ENCODE measurements at regions of chr3 and their contacts with region 1.

Region 1: DNA sequence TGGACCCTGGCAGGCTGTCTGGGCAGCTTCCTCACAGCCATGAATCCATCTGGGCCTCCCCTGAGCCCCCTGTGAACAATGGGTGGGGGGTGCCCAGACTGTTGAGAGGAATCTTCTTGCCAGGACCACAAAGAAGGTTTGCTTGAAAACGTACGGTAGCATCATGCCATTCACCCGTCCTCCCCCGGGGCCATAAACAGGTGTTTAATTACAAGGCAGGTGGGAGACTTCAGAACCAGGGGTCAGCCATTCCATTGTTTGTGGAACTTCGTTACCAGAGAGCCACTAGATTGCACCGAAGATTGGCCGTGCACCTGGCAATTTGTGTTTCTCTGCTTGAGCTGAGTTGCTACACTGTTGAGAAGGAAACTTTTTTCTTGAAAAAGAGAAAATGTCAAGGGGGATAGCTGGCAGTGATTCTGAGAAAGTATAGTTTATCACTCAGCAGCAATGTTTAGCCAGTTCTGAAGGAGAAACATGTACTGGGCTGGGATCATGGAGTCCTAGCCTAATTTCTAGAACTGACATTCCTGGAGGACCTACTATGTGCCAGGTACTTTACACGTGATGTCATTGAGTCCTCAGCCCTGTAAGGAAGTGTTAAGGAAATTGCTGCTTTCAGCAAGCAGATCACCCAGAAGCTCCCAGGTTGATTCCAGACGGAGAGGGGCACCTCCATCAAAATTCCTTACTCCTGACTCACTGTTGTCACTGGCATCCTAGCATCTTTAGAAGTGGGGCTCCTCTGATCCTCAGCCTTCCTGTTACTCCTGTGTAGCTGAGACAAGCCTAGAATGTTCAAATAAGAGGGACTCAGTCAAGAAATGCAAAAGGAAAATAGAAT is 103.8 kb upstream of the UBE2E1 start:
- DNase-seq: no peak
- ATAC-seq: no peak
- H3K4me3 ChIP-seq: no peak overlapping the region
- H3K27ac ChIP-seq: no peak overlapping the region
- H3K4me1 ChIP-seq: no peaks in the 10 kb centered on the region
- H3K27me3 ChIP-seq: no peaks in the 10 kb centered on the region
- CTCF ChIP-seq: no peak
- EP300 ChIP-seq: no peak
- POLR2A ChIP-seq: no peak
- RAD21 ChIP-seq: no peak

Region 2: DNA sequence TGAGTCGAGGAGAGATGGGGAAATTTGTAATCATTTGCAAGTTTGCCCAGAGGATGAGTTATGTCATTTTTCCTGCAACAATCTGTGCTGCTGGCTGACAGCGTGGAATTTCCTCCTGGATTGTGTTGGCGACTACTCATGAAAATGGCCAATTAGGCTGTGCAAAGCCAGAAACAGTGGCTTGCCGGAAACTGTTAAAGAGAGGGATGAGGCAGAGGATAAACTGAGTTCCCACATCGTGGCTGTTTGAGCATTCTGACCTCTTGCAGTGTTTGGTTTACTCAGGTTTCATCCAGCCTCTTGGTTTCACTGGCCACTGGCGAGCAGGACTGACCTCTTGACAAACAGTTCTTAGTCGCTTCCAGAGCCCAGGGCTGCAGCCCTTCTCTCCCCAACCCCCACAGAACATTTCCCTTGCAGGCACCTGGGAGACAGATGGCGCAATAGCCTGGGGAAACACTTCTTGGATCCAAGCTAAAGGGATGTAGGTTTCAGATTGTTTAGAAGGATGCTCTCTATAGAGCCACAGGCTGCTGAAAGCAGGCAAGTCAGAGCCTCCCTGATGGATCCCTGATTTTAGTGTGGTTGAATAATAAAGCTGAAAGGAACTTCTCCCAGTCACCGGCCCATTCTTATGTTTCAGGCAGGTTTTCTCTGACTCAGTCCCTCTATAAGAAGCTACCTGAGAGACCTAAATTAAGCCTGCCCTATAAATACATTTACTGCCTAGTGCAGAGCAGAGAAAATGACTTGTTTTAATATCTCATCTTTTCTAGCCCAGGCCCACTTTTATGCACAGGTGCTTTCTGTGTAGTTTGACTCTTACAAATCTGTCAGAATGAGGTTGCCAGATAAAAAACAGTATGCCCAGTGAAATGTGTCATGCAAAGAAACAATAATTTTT is 11.0 kb after region 1 on chr3:
- CTCF ChIA-PET with region 1: interaction called, 12 read pairs
- POLR2A ChIA-PET with region 1: no interaction called
- RAD21 ChIA-PET with region 1: interaction called, 4 read pairs
- SMC1A ChIA-PET with region 1: interaction called, 6 read pairs
- in situ Hi-C with region 1: no loop called
- intact Hi-C with region 1: no loop called
- DNase-seq: no peak
- ATAC-seq: no peak
- H3K4me3 ChIP-seq: no peak overlapping the region
- H3K27ac ChIP-seq: no peak overlapping the region
- H3K4me1 ChIP-seq: peaks cover 3% of the 10 kb centered on the region; the same call in 1 of the 2 replicates
- H3K27me3 ChIP-seq: no peaks in the 10 kb centered on the region
- CTCF ChIP-seq: peak in 1 of 3 experiments; percentile 20; a peak in 1 of 6 replicates
- EP300 ChIP-seq: no peak
- POLR2A ChIP-seq: no peak
- RAD21 ChIP-seq: no peak

Region 3: GRCh38 chr3:24088782-24089181 is 386.8 kb after region 1 on chr3:
- CTCF ChIA-PET with region 1: no interaction called
- POLR2A ChIA-PET with region 1: no interaction called
- RAD21 ChIA-PET with region 1: no interaction called
- SMC1A ChIA-PET with region 1: no interaction called
- in situ Hi-C with region 1: no loop called
- intact Hi-C with region 1: no loop called
- DNase-seq: no peak
- ATAC-seq: peak; percentile 78
- H3K4me3 ChIP-seq: no peak overlapping the region
- H3K27ac ChIP-seq: no peak overlapping the region
- H3K4me1 ChIP-seq: no peaks in the 10 kb centered on the region
- H3K27me3 ChIP-seq: no peaks in the 10 kb centered on the region; a peak in 1 of 4 replicates
- CTCF ChIP-seq: peak; percentile 13 to 47 (median 36); a peak in 5 of 6 replicates
- EP300 ChIP-seq: no peak
- POLR2A ChIP-seq: no peak
- RAD21 ChIP-seq: peak; percentile 24; the same call in 1 of the 2 replicates